ENCODE measurements at regions of chr11 and their contacts with region 1.

Region 1: DNA sequence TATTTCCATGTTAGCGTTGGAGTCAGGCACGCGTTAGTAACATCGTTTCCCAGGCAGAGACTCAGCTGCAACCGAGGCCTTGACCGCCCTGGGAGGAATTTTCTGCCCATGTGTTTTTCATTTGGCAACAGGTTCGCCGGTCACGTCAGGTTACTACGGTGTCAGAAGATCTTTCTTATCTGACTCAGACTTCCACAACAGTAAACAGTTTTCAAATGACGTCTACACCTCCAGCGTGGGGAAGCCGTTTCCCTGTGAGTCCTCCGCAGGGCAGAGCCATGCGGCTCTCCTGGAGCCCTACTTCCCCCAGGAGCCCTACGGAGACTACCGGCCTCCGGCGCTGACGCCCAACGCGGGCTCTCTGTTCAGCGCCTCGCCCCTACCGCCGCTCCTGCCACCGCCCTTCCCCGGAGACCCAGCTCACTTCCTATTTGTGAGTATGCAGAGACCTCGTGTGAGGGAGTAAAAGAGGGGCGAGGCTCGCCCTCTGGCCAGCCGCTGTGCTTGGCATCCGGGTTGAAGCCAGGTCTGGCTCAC is 14.3 kb upstream of the POU2AF3 start:
- DNase-seq: peak; percentile 89
- H3K4me3 ChIP-seq: peak overlapping the region in 1 of 4 donors; percentile 13
- H3K27ac ChIP-seq: no peak overlapping the region
- H3K4me1 ChIP-seq: peaks cover 0 to 23% (median 13%) of the 10 kb centered on the region in 4 donors
- H3K27me3 ChIP-seq: no peaks in the 10 kb centered on the region
- CTCF ChIP-seq: no peak
- EP300 ChIP-seq: no peak
- POLR2A ChIP-seq: no peak

Region 2: DNA sequence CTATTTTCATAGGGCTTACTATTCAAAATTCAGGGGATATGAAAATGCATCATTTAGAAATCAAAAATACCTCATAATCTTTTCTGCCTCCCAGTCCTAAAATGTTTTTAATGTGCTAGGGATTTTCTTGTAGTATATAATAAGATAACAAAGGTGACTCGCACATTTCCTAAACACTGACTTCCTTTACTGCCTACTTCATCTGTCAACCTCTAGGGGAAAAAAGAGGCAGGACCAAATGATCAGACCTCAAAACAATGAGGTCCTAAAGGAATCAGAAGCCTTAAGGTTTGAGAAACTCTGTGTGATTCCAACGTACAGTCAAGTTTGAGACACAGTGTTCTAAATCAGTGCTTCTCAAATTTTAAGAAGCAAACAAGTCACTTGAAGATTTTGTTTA is 94.5 kb before region 1 on chr11:
- intact Hi-C with region 1: no loop called
- DNase-seq: no peak
- H3K4me3 ChIP-seq: no peak overlapping the region
- H3K27ac ChIP-seq: no peak overlapping the region
- H3K4me1 ChIP-seq: no peaks in the 10 kb centered on the region
- H3K27me3 ChIP-seq: no peaks in the 10 kb centered on the region
- CTCF ChIP-seq: no peak
- EP300 ChIP-seq: no peak
- POLR2A ChIP-seq: no peak

Region 3: GRCh38 chr11:111422494-111423249 is 138.7 kb after region 1 on chr11:
- intact Hi-C with region 1: loop called (anchors 2 kb)
- DNase-seq: no peak
- H3K4me3 ChIP-seq: no peak overlapping the region
- H3K27ac ChIP-seq: no peak overlapping the region
- H3K4me1 ChIP-seq: peaks cover 7 to 27% (median 25%) of the 10 kb centered on the region in 4 donors
- H3K27me3 ChIP-seq: no peaks in the 10 kb centered on the region
- CTCF ChIP-seq: peak; percentile 62 to 79 (median 70)
- EP300 ChIP-seq: no peak
- POLR2A ChIP-seq: no peak

Region 4: DNA sequence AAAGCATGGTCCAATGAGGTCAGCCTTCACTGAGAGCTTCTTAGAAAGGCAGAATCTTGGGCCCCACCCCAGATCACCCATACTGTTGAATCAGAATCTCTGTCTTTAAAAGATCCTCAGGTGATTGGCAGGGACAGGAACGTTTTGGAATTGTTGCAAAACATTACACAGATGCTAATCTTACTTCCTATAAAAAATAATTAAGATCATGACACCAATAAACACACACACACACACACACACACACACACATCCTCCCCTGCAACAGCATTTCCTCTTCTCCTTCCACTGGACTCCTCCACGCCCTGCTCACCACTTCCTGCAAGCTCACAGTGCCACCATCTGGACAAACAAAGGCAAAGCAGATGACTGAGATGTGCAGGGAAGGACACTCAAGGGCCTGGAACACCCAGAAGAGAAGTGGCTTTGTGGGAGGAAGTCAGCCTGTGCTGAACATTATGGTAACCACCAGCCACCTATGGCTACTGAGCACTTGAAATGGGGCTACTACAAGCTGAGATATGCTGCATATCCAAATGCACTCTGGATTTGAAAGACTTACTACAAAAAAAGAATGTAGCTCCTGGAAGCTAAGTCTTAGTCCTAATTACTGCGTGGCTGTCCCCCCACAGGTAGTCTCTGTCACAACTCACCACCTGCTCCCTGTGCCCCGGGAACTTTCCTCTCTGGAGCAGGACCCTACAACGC is 162.5 kb after region 1 on chr11:
- intact Hi-C with region 1: loop called (anchors 1 kb)
- DNase-seq: peak; percentile 93
- H3K4me3 ChIP-seq: no peak overlapping the region
- H3K27ac ChIP-seq: no peak overlapping the region
- H3K4me1 ChIP-seq: peaks cover 7 to 12% (median 10%) of the 10 kb centered on the region in 4 donors
- H3K27me3 ChIP-seq: peaks cover 0 to 3% (median 0%) of the 10 kb centered on the region in 4 donors
- CTCF ChIP-seq: peak; percentile 77 to 87 (median 83)
- EP300 ChIP-seq: no peak
- POLR2A ChIP-seq: no peak

Region 5: DNA sequence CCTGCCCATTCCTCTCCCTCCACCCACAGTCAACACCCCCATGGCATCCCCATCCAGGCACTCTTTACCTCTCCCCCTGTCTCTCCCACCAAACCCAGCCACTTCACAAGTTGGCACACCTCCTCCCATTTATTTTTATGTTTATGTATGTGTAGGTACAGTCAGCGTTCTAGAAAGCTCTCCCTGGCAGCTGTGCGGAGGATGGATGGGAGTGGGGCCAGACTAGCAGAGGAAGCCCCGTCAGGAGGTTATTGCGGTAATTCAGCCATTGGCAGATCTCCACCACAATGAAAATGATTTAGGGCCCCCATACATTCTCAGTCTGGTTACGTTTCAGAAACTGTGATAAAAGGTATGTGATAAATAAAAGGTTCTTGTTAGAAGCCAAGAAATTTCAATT is 176.8 kb after region 1 on chr11:
- intact Hi-C with region 1: no loop called
- DNase-seq: peak; percentile 66
- H3K4me3 ChIP-seq: no peak overlapping the region
- H3K27ac ChIP-seq: no peak overlapping the region
- H3K4me1 ChIP-seq: no peaks in the 10 kb centered on the region
- H3K27me3 ChIP-seq: peaks cover 0 to 33% (median 0%) of the 10 kb centered on the region in 4 donors
- CTCF ChIP-seq: no peak
- EP300 ChIP-seq: no peak
- POLR2A ChIP-seq: no peak

Measured in esophagus muscularis mucosa (tissue), 4 donors.